ENCODE measurements at regions of chr6 and their contacts with region 1.

Region 1: DNA sequence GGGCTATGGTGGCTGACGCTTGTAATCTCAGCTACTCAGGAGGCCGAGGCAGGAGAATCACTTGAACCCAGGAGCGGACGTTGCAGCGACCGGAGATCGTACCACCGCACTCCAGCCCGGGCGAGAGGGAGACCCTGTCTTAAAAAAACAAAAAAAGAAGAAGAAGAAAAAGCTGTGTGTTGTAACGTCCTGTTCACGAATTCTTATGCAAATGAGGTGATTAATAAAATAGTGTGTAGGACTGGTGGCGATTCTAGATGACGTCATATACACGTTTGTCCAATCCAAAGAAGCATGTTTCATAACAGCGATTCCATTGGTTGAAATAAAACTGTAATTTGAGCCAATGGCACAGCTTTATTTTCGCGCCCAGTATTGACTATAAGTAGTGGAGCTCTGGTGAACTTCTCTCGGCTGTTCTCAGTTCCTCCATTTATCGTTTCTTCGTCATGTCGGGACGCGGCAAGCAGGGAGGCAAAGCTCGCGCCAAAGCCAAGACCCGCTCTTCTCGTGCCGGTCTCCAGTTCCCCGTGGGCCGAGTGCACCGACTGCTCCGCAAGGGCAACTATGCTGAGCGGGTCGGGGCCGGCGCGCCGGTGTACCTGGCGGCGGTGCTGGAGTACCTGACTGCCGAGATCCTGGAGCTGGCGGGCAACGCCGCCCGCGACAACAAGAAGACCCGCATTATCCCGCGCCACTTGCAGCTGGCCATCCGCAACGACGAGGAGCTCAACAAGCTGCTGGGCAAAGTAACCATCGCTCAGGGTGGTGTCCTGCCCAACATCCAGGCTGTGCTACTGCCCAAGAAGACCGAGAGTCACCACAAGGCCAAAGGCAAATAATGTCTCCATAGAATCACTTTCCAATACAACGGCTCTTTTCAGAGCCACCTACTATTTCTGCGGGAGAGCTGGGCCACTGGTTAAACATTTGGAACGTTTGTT is 47.0 kb downstream of the OR2B2 start:
- DNase-seq: peak in 1 of 2 experiments; percentile 86
- H3K4me3 ChIP-seq: peak overlapping the region; percentile 61 to 86 (median 79)
- H3K27ac ChIP-seq: peak overlapping the region; percentile 90
- H3K4me1 ChIP-seq: peaks cover 0 to 5% (median 1%) of the 10 kb centered on the region in 4 experiments; a peak in 2 of 7 replicates
- H3K27me3 ChIP-seq: no peaks in the 10 kb centered on the region
- CTCF ChIP-seq: no peak
- EP300 ChIP-seq: no peak
- POLR2A ChIP-seq: peak; percentile 93 to 97
- RAD21 ChIP-seq: no peak; a peak in 1 of 4 replicates

Region 2: GRCh38 chr6:26031595-26032339 is 1833.4 kb before region 1 on chr6:
- CTCF ChIA-PET with region 1: no interaction called
- POLR2A ChIA-PET with region 1: interaction called, 57 read pairs
- DNase-seq: peak; percentile 82 to 88
- H3K4me3 ChIP-seq: peak overlapping the region; percentile 81 to 95 (median 92)
- H3K27ac ChIP-seq: peak overlapping the region; percentile 96
- H3K4me1 ChIP-seq: peaks cover 2 to 18% (median 13%) of the 10 kb centered on the region in 4 experiments; a peak in 5 of 7 replicates
- H3K27me3 ChIP-seq: no peaks in the 10 kb centered on the region
- CTCF ChIP-seq: no peak
- EP300 ChIP-seq: peak in 1 of 2 experiments; percentile 2; a peak in 1 of 3 replicates
- POLR2A ChIP-seq: peak; percentile 99 to 100
- RAD21 ChIP-seq: no peak

Region 3: GRCh38 chr6:26196846-26197648 is 1668.1 kb before region 1 on chr6:
- CTCF ChIA-PET with region 1: no interaction called
- POLR2A ChIA-PET with region 1: interaction called, 163 read pairs
- DNase-seq: peak in 1 of 2 experiments; percentile 76
- H3K4me3 ChIP-seq: peak overlapping the region; percentile 85 to 98 (median 89)
- H3K27ac ChIP-seq: peak overlapping the region; percentile 82
- H3K4me1 ChIP-seq: peaks cover 0 to 1% (median 0%) of the 10 kb centered on the region in 4 experiments; a peak in 1 of 7 replicates
- H3K27me3 ChIP-seq: no peaks in the 10 kb centered on the region
- CTCF ChIP-seq: no peak
- EP300 ChIP-seq: no peak
- POLR2A ChIP-seq: peak; percentile 99
- RAD21 ChIP-seq: no peak

Region 4: GRCh38 chr6:26223650-26224546 is 1641.3 kb before region 1 on chr6:
- CTCF ChIA-PET with region 1: no interaction called
- POLR2A ChIA-PET with region 1: interaction called, 119 read pairs
- DNase-seq: no peak
- H3K4me3 ChIP-seq: peak overlapping the region; percentile 61 to 94 (median 76)
- H3K27ac ChIP-seq: peak overlapping the region; percentile 91
- H3K4me1 ChIP-seq: peaks cover 0 to 7% (median 3%) of the 10 kb centered on the region in 4 experiments; a peak in 5 of 7 replicates
- H3K27me3 ChIP-seq: no peaks in the 10 kb centered on the region
- CTCF ChIP-seq: no peak
- EP300 ChIP-seq: no peak
- POLR2A ChIP-seq: peak; percentile 48 to 76; a peak in 2 of 3 replicates
- RAD21 ChIP-seq: no peak

Region 5: DNA sequence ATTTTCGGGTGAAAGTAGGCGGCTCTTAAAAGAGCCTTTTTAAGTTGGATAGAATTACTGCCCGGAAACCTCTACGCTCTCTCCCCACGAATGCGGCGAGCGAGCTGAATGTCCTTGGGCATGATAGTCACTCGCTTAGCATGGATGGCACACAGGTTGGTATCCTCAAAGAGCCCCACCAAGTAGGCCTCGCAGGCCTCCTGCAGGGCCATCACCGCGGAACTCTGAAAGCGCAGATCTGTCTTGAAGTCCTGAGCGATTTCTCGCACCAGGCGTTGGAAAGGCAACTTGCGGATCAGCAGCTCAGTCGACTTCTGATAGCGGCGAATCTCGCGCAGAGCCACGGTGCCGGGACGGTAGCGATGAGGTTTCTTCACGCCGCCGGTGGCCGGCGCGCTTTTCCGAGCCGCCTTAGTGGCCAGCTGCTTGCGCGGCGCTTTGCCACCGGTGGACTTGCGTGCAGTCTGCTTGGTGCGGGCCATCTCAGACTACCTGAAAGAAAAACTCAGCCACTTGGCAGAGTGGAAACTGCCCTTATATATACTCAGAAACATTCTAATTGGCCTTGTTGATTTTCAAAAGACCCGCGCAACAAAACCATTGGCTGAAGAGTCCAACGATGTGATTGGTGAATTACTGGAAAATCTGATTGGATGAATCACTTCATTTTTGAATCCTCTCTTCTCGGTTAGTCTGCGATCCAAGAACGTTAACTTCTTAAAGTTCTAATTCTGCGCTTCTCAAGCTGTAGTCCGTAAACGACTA is 1594.1 kb before region 1 on chr6:
- CTCF ChIA-PET with region 1: no interaction called
- POLR2A ChIA-PET with region 1: interaction called, 49 read pairs
- DNase-seq: peak in 1 of 2 experiments; percentile 85
- H3K4me3 ChIP-seq: peak overlapping the region; percentile 73 to 97 (median 88)
- H3K27ac ChIP-seq: peak overlapping the region; percentile 93
- H3K4me1 ChIP-seq: peaks cover 0 to 10% (median 4%) of the 10 kb centered on the region in 4 experiments; a peak in 4 of 7 replicates
- H3K27me3 ChIP-seq: no peaks in the 10 kb centered on the region
- CTCF ChIP-seq: no peak
- EP300 ChIP-seq: no peak
- POLR2A ChIP-seq: peak; percentile 94 to 100
- RAD21 ChIP-seq: no peak

Region 6: DNA sequence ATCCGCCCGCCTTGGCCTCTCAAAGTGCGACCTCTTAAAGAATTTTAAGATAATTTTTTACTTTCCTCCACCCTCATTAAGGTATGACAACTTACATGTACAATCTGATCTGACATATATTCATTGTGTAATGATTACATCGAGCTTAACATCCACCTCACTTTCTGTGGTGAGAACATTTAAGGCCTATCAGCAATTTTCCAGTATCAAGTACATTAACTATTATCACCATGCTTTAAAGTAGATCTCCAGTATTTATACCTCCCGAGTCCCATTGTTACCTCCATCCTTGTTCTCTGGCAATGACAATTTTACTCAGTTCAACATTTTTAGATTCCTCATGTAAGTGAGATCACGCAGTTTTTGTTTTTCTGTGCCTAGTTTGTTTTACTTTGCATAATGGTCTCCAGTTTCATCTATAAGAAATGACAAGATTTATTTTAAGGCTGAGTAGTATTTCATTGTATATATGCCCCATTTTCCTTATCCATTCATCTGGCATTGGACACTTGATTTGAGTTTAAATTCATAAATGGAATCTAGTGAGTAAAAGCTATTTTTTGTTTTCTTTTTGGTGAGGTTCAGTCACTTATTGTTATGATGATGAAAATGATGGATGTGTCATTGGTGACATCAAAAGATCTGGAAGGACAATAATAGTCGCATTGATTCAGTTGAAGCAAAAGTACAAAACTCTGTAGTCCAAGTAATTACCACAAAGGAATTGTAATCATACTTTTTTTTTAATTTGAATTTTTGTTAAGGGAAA is 40.0 kb before region 1 on chr6:
- CTCF ChIA-PET with region 1: interaction called, 4 read pairs
- POLR2A ChIA-PET with region 1: interaction called, 2,035 read pairs
- DNase-seq: no peak
- H3K4me3 ChIP-seq: peak overlapping the region; percentile 59 to 90 (median 81)
- H3K27ac ChIP-seq: peak overlapping the region; percentile 95; the same call in 1 of the 2 replicates
- H3K4me1 ChIP-seq: peaks cover 0 to 3% (median 0%) of the 10 kb centered on the region in 4 experiments; a peak in 1 of 7 replicates
- H3K27me3 ChIP-seq: no peaks in the 10 kb centered on the region
- CTCF ChIP-seq: no peak
- EP300 ChIP-seq: no peak
- POLR2A ChIP-seq: peak in 1 of 2 experiments; percentile 32; a peak in 2 of 3 replicates
- RAD21 ChIP-seq: no peak